IMR-90 (cell line): ENCODE measurements at regions of chr15 and their contacts with region 1.

Region 1: DNA sequence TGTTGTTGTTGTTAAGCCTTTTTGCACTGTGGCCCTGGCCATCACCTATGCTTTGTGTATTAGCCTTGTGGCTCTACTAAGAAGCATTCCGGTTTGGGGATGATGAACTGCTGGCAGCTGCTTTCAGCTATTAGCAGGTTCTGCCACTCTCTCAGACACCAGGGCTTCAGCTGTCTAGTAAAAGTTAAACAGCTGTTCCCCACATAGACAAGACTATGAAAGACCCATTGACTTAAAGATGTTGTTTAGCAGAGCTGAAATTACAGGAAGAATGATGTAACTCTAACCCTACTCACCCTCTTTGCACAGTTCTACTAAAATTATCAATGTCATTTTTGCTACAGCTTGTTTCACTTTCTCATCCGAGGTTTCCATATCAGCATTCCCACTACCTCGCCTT is 131.2 kb upstream of the CGNL1 start:
- DNase-seq: peak; percentile 69
- ATAC-seq: peak; percentile 91
- H3K4me3 ChIP-seq: no peak overlapping the region
- H3K27ac ChIP-seq: peak overlapping the region; percentile 10; the same call in 1 of the 2 replicates
- H3K4me1 ChIP-seq: peaks cover 7% of the 10 kb centered on the region
- H3K27me3 ChIP-seq: no peaks in the 10 kb centered on the region
- CTCF ChIP-seq: no peak
- POLR2A ChIP-seq: no peak
- RAD21 ChIP-seq: no peak

Region 2: GRCh38 chr15:57224664-57225063 is 20.5 kb before region 1 on chr15:
- CTCF ChIA-PET with region 1: no interaction called
- POLR2A ChIA-PET with region 1: no interaction called
- dilution Hi-C with region 1: no loop called
- in situ Hi-C with region 1: no loop called
- intact Hi-C with region 1: loop called (anchors 2 kb)
- DNase-seq: peak; percentile 70
- ATAC-seq: no peak
- H3K4me3 ChIP-seq: no peak overlapping the region
- H3K27ac ChIP-seq: no peak overlapping the region
- H3K4me1 ChIP-seq: peaks cover 3% of the 10 kb centered on the region; the same call in 1 of the 2 replicates
- H3K27me3 ChIP-seq: no peaks in the 10 kb centered on the region
- CTCF ChIP-seq: no peak
- POLR2A ChIP-seq: no peak
- RAD21 ChIP-seq: no peak

Region 3: GRCh38 chr15:57427367-57427821 is 182.3 kb after region 1 on chr15:
- CTCF ChIA-PET with region 1: no interaction called
- POLR2A ChIA-PET with region 1: no interaction called
- dilution Hi-C with region 1: no loop called
- in situ Hi-C with region 1: no loop called
- intact Hi-C with region 1: no loop called
- DNase-seq: no peak
- ATAC-seq: peak; percentile 72
- H3K4me3 ChIP-seq: no peak overlapping the region
- H3K27ac ChIP-seq: no peak overlapping the region
- H3K4me1 ChIP-seq: peaks cover 4% of the 10 kb centered on the region; the same call in 1 of the 2 replicates
- H3K27me3 ChIP-seq: peaks cover 19% of the 10 kb centered on the region
- CTCF ChIP-seq: no peak
- POLR2A ChIP-seq: no peak
- RAD21 ChIP-seq: no peak

Region 4: DNA sequence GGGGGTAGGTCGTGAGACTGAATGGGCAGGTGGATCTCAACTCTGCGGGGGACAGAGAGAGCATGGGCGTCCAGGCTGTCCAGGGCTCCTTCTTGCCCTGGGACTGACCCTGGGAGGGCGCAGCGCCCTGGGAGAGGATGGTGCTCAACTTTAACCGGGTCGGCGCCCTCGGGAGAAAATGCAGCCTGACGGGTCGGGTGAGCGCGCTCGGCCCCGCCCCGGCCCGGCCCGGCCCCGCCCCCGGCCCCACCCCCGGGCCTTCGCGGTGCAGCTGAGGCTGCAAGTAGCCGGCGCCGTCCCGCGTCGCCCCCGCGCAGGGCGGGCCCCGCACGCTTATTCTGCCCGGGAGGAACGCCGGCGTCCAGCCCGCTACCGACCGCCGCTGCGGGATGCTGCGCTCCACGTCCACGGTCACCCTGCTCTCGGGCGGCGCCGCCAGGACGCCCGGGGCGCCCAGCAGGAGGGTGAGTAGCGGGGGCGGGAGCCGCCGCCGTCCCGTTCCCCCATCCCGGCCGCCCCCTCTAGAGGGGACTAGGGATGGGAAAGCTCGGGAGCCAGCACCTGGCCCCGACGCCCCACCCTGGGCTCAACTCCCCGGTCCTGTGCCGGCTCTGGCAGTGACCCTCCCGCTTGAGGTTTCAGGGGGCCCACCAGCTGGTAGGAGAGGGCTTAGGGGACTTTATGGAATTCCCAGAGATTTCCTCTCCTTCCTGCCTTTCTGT is 346.7 kb after region 1 on chr15 and contains the start of gene MYZAP:
- CTCF ChIA-PET with region 1: no interaction called
- POLR2A ChIA-PET with region 1: no interaction called
- dilution Hi-C with region 1: no loop called
- in situ Hi-C with region 1: no loop called
- intact Hi-C with region 1: no loop called
- DNase-seq: no peak
- ATAC-seq: peak; percentile 97
- H3K4me3 ChIP-seq: peak within 1 kb of the TSS; percentile 32; the same call in 1 of the 2 replicates
- H3K27ac ChIP-seq: no peak within 1 kb of the TSS
- H3K4me1 ChIP-seq: no peaks in the 10 kb centered on the region
- H3K27me3 ChIP-seq: peaks cover 42% of the 10 kb centered on the region
- CTCF ChIP-seq: no peak
- POLR2A ChIP-seq: no peak
- RAD21 ChIP-seq: no peak
- total RNA-seq, gene MYZAP: not detected in 2 replicates